Naive thymus-derived CD8-positive, alpha-beta T cell (primary cell): ENCODE measurements at regions of chr20 and their contacts with region 1.

Region 1: DNA sequence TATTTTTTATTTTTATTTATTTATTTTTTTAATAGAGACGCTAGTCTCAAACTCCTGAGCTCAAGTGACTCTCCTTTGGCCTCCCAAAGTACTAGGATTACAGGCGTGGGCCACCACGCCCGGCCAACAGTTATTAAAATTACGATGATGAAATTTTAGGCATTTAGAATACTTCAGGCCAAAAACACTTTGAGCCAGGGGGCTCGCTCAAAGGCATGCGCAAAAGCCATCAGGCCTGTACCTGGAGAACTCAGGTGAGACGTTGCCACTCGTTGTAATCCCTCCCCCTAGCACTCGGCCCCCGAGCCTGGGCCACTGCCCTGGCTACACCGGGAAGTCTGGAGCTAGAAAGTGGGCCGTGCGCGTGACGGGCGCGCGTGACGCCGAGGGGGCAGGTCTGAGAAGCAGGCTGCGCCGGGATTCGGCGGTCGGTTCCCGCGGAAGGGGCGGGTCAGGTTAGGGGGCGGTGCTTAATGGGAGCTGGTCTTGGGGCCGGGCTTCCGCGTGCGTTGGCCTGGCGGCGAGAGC is 337 bp upstream of the CBFA2T2 start:
- DNase-seq: peak; percentile 97 to 99 (median 99)
- ATAC-seq: peak; percentile 92 to 94
- H3K4me3 Mint-ChIP-seq: peak overlapping the region; percentile 81 to 93 (median 86)
- H3K27ac Mint-ChIP-seq: peak overlapping the region; percentile 82 to 98 (median 94)
- H3K4me1 Mint-ChIP-seq: peaks cover 6 to 30% (median 15%) of the 10 kb centered on the region in 4 donors
- H3K27me3 Mint-ChIP-seq: no peaks in the 10 kb centered on the region

Region 2: GRCh38 chr20:33351696-33352095 is 137.9 kb before region 1 on chr20:
- POLR2A ChIA-PET with region 1: no interaction called
- DNase-seq: no peak
- ATAC-seq: no peak
- H3K4me3 Mint-ChIP-seq: no peak overlapping the region
- H3K27ac Mint-ChIP-seq: peak overlapping the region in 2 of 10 donors; percentile 11 to 12
- H3K4me1 Mint-ChIP-seq: peaks cover 0 to 5% (median 2%) of the 10 kb centered on the region in 4 donors
- H3K27me3 Mint-ChIP-seq: no peaks in the 10 kb centered on the region

Region 3: DNA sequence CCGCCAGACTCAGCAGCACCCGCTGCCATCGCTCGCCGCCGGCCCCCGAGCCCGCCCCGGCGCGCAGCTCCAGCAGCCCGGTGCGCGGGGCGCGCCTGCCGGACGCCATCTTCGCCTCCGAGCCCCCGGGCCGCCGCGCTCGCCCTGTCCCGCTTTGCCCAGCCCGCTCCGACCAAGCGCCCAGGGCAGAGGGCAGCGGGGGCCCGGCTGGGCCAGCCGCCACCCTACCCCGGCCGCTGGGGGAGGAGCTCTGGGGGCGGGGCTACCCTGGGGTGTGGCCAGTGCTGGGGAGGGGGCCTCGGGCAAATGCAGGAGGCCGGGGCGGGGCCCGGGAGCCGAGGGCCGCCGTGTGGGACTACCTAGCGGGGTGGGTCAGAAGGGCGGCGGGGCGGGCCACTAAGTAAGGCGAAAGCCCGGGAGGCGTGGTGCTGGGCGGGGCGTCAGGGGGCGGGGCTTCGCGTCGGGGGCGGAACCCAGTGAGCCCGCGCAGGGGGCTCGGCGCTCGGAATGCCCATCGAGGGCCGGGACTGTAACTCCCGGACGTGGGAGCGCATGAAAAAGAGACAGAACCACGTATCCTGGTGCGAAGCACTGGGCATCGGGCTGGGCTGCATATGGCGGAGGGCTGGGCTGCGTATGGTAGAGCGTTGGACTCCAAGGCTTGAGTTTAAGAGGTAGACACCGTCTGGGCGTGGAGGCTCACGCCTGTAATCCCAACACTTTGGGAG is 45.9 kb before region 1 on chr20 and contains the start of gene SNTA1:
- POLR2A ChIA-PET with region 1: interaction called, 22 read pairs
- DNase-seq: peak; percentile 60 to 92 (median 78)
- ATAC-seq: peak; percentile 63 to 71
- H3K4me3 Mint-ChIP-seq: peak within 1 kb of the TSS; percentile 87 to 96 (median 92)
- H3K27ac Mint-ChIP-seq: peak within 1 kb of the TSS; percentile 76 to 96 (median 92)
- H3K4me1 Mint-ChIP-seq: peaks cover 14 to 31% (median 26%) of the 10 kb centered on the region in 4 donors
- H3K27me3 Mint-ChIP-seq: no peaks in the 10 kb centered on the region
- polyA plus RNA-seq, gene SNTA1: 6.1 to 9.1 (median 6.4) TPM

Region 4: GRCh38 chr20:33554914-33555420 is 65.4 kb after region 1 on chr20:
- POLR2A ChIA-PET with region 1: interaction called, 14 read pairs
- DNase-seq: peak; percentile 7 to 90 (median 58)
- ATAC-seq: peak; percentile 98
- H3K4me3 Mint-ChIP-seq: peak overlapping the region; percentile 65 to 82 (median 74)
- H3K27ac Mint-ChIP-seq: peak overlapping the region; percentile 91 to 99 (median 96)
- H3K4me1 Mint-ChIP-seq: peaks cover 12 to 40% (median 29%) of the 10 kb centered on the region in 4 donors
- H3K27me3 Mint-ChIP-seq: no peaks in the 10 kb centered on the region

Region 5: GRCh38 chr20:33568378-33568777 is 78.8 kb after region 1 on chr20:
- POLR2A ChIA-PET with region 1: no interaction called
- DNase-seq: no peak
- ATAC-seq: no peak
- H3K4me3 Mint-ChIP-seq: no peak overlapping the region
- H3K27ac Mint-ChIP-seq: peak overlapping the region in 4 of 10 donors; percentile 2 to 33 (median 16)
- H3K4me1 Mint-ChIP-seq: peaks cover 16 to 51% (median 39%) of the 10 kb centered on the region in 4 donors
- H3K27me3 Mint-ChIP-seq: no peaks in the 10 kb centered on the region

Region 6: GRCh38 chr20:33731693-33732165 is 242.2 kb after region 1 on chr20 and contains the start of gene ZNF341:
- POLR2A ChIA-PET with region 1: interaction called, 18 read pairs
- DNase-seq: peak; percentile 81 to 94 (median 88)
- ATAC-seq: peak; percentile 75 to 87
- H3K4me3 Mint-ChIP-seq: peak within 1 kb of the TSS; percentile 83 to 95 (median 90)
- H3K27ac Mint-ChIP-seq: peak within 1 kb of the TSS; percentile 84 to 98 (median 95)
- H3K4me1 Mint-ChIP-seq: peaks cover 18 to 28% (median 23%) of the 10 kb centered on the region in 4 donors
- H3K27me3 Mint-ChIP-seq: no peaks in the 10 kb centered on the region
- polyA plus RNA-seq, gene ZNF341: 0.75 to 3.8 (median 1.0) TPM

Region 7: DNA sequence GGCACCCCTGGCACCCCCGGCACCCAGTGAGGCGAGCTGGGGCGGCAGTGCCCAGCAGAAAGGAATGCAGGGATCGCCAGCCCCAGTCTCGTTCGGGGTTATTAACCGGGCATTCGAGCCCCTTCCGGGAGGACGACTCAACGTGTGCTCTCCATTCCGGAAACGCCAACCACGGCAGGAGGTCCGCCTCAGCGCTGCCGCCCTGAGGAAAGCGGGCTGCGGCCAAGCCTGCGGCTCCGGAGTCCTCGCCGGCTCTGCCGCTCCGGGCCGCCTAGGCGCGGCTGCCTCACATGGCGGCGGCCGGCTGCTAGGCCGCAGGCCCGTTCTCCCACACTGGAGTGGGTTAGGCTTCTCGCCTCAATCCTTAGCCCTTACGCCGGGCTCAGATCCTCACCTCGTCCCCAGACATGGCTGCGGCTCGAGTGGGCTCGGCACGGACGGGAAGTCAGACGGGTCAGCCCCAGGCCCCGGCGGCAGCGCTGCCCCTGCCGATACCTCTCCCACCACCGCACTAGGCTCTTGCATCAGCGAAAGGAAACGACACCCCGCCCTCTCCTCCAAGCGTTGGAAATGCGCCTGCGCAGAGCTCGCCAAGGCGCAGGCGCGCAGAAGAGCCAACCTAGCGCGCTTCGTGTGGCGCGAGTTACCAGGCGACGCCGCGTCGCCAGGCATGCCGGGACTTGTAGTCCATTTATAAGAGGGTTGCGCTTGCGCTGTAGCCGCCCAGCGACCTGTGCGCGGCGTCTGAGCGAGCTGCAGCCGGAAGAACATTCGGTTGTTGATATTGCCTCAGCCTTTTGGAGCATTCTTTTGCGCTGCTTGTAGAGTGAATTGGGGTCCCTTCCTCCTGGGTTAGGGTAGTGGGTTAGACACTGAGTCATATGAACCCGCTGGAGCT is 622.4 kb after region 1 on chr20 and contains the start of gene EIF2S2:
- POLR2A ChIA-PET with region 1: interaction called, 15 read pairs
- DNase-seq: peak; percentile 91 to 98 (median 94)
- ATAC-seq: peak; percentile 91 to 92
- H3K4me3 Mint-ChIP-seq: peak within 1 kb of the TSS; percentile 90 to 99 (median 96)
- H3K27ac Mint-ChIP-seq: peak within 1 kb of the TSS; percentile 96 to 100 (median 98)
- H3K4me1 Mint-ChIP-seq: peaks cover 23 to 51% (median 43%) of the 10 kb centered on the region in 4 donors
- H3K27me3 Mint-ChIP-seq: no peaks in the 10 kb centered on the region
- polyA plus RNA-seq, gene EIF2S2: 17.5 to 21.6 (median 20.2) TPM